ENCODE measurements at regions of chr13 and their contacts with region 1.

Region 1: DNA sequence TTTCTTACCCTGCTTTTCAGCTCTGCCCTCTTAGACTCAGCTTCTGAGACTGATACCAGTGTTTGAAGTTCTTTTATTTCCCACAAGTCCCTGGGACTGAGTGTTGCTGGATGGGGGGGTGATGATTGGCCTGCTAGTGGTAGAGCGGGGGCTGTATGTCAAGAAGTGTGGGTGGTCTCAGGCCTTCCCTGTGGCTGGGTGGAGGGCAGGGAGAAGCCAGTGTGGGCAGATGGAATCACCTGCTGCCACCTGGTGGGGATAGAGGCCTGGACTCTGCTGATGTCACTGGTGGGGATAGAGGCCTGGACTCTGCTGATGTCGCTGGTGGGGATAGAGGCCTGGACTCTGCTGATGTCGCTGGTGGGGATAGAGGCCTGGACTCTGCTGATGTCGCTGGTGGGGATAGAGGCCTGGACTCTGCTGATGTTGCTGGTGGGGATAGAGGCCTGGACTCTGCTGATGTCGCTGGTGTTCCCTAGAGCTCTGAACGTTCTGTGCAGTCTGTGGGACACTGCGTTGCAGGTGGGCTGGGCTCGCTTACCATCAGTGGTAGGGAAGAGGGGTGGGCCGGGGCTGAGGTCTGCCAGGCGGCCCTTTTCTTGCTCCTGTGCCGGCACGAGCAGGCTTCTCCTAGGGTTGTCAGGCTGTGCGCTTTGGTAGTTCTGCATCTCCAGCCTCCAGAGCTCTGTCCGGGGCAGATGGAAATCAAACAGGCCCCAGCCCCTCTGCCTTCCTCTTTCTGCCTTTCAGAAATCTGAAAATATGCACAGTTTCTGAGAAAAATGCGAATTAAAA is 101.3 kb downstream of the ARHGEF7 start:
- DNase-seq: no peak
- H3K4me3 ChIP-seq: no peak overlapping the region
- H3K27ac ChIP-seq: peak overlapping the region; percentile 36
- H3K4me1 ChIP-seq: peaks cover 64% of the 10 kb centered on the region
- H3K27me3 ChIP-seq: no peaks in the 10 kb centered on the region
- CTCF ChIP-seq: peak in 1 of 3 experiments; percentile 32
- POLR2A ChIP-seq: no peak

Region 2: GRCh38 chr13:111066544-111066943 is 149.8 kb before region 1 on chr13:
- intact Hi-C with region 1: loop called (anchors 10 kb)
- DNase-seq: peak in 1 of 2 donors; percentile 69
- H3K4me3 ChIP-seq: peak overlapping the region in 1 of 2 donors; percentile 53
- H3K27ac ChIP-seq: no peak overlapping the region
- H3K4me1 ChIP-seq: no peaks in the 10 kb centered on the region
- H3K27me3 ChIP-seq: no peaks in the 10 kb centered on the region
- CTCF ChIP-seq: no peak
- POLR2A ChIP-seq: no peak

Region 3: GRCh38 chr13:111114362-111115060 is 101.9 kb before region 1 on chr13:
- intact Hi-C with region 1: loop called (anchors 5 kb)
- DNase-seq: no peak
- H3K4me3 ChIP-seq: peak overlapping the region; percentile 52 to 69
- H3K27ac ChIP-seq: peak overlapping the region; percentile 89
- H3K4me1 ChIP-seq: peaks cover 38% of the 10 kb centered on the region
- H3K27me3 ChIP-seq: no peaks in the 10 kb centered on the region
- CTCF ChIP-seq: no peak
- POLR2A ChIP-seq: peak in 1 of 2 donors; percentile 6